IMR-90 (cell line): ENCODE measurements at regions of chr12 and their contacts with region 1.

Region 1: GRCh38 chr12:3041558-3042164 is 35.5 kb upstream of the TSPAN9 start:
- DNase-seq: peak; percentile 67
- ATAC-seq: peak; percentile 94
- H3K4me3 ChIP-seq: no peak overlapping the region
- H3K27ac ChIP-seq: no peak overlapping the region
- H3K4me1 ChIP-seq: no peaks in the 10 kb centered on the region
- H3K27me3 ChIP-seq: no peaks in the 10 kb centered on the region
- CTCF ChIP-seq: peak; percentile 69
- POLR2A ChIP-seq: no peak
- RAD21 ChIP-seq: peak; percentile 69

Region 2: GRCh38 chr12:2794736-2795289 is 246.8 kb before region 1 on chr12 and contains the start of gene FKBP4:
- CTCF ChIA-PET with region 1: no interaction called
- POLR2A ChIA-PET with region 1: no interaction called
- dilution Hi-C with region 1: no loop called
- in situ Hi-C with region 1: no loop called
- intact Hi-C with region 1: loop called (anchors 1 kb)
- DNase-seq: peak; percentile 73
- ATAC-seq: peak; percentile 88
- H3K4me3 ChIP-seq: peak within 1 kb of the TSS; percentile 60
- H3K27ac ChIP-seq: peak within 1 kb of the TSS; percentile 61; the same call in 1 of the 2 replicates
- H3K4me1 ChIP-seq: peaks cover 4% of the 10 kb centered on the region; the same call in 1 of the 2 replicates
- H3K27me3 ChIP-seq: no peaks in the 10 kb centered on the region; the same call in 1 of the 2 replicates
- CTCF ChIP-seq: no peak
- POLR2A ChIP-seq: no peak
- RAD21 ChIP-seq: no peak
- total RNA-seq, gene FKBP4: 36.0 and 44.2 TPM in 2 replicates